Panc1 (cell line): ENCODE measurements at regions of chr6 and their contacts with region 1.

Region 1: DNA sequence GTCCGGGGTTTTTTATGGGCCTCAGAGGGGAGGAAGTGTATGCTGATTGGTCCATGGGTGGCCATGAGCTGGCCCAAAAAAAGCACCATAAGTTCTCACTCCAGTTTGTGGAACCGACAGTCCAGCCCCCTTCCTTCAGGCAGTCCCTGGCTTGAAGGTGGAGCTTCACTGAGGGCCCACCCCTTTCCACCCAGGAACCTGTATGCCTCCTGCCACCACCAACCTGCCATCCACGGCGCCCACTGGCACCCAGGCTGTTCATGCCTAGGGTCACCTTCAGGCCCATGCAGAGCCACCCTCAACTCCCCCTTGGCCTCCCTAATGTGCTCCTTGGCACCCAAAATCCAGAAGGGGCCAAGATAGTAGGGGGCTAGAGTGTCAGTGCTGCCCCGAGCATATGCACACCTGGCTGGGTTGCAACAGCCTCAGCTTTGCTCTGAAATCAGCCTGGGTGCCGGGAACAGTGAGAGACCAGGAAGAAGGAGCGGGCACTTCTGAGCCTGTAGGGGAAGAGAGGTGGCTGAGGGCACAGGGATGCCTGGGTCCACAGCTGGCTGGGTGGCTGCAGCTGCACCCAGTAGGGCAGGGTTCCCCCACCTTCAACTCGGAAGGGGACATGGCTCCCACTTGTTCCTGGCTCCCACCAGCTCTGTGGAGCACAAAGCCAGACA is 292.4 kb downstream of the ARHGAP18 start:
- DNase-seq: no peak
- ATAC-seq: no peak
- H3K4me3 ChIP-seq: no peak overlapping the region
- H3K27ac ChIP-seq: no peak overlapping the region
- H3K4me1 ChIP-seq: no peaks in the 10 kb centered on the region
- H3K27me3 ChIP-seq: no peaks in the 10 kb centered on the region
- CTCF ChIP-seq: no peak

Region 2: DNA sequence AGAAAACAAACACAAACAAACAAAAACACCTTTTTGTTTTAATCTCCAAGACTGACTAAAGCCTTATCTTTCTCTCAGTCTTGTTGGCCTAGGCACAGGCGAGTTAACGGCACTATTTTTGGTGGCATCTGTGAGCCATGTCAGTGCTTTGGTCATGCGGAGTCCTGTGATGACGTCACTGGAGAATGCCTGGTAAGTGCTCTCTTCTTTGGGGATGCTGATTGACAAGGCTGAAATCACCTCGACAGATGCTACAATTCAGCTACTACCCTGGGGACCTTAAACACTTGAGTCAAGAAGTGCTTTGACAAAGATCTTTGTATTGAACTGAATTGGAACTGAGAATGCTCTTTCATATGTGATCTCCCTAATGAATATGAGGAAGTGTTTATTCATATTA is 150.5 kb before region 1 on chr6:
- CTCF ChIA-PET with region 1: interaction called, 10 read pairs
- POLR2A ChIA-PET with region 1: no interaction called
- in situ Hi-C with region 1: no loop called
- intact Hi-C with region 1: no loop called
- DNase-seq: no peak
- ATAC-seq: no peak
- H3K4me3 ChIP-seq: no peak overlapping the region
- H3K27ac ChIP-seq: no peak overlapping the region
- H3K4me1 ChIP-seq: no peaks in the 10 kb centered on the region
- H3K27me3 ChIP-seq: no peaks in the 10 kb centered on the region
- CTCF ChIP-seq: no peak